ENCODE measurements at regions of chr15 and their contacts with region 1.

Region 1: DNA sequence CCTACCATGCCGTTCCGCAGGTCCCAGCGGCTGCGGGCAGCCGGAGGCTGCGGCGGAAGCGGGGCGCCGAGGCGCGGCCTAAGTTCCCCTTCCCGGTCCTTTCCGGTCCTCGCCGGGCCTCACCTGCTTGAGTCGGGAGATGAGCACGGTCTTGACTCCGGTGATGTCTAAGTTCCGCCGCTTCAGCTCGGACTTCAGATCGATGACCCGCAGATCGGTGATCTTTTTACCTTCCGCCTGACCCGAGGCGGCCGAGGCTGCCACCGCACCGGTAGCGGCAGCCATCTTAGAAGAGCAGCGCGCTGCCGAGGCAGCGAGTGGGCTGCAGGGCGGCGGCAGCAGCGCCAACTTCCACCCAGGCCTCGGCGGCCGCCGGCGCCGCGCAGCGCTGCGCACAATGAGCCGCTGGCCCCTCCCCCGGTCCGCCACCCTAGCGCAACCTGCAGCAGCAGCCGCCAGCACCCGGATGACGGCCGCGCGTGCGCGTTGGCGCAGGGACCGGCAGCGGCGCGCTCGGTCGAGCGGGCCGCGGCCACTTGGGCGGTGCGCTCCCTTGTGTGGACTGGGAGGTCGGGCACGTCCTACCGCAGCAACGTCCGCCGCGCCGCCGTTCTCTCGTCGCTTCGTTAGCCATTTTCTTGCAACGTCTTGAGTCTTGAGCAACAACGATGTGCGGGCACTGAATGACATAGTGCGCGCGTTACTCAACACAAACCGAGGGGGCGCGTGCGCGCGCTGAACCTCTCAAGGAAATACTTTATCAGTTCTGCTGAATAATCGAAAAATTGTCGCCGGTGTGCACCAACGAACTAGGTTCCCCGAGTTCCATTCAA is at the start of gene SLTM:
- DNase-seq: peak; percentile 96
- ATAC-seq: peak; percentile 94
- H3K4me3 Mint-ChIP-seq: peak within 1 kb of the TSS; percentile 90
- H3K27ac Mint-ChIP-seq: peak within 1 kb of the TSS; percentile 100
- H3K4me1 Mint-ChIP-seq: peaks cover 17% of the 10 kb centered on the region
- H3K27me3 Mint-ChIP-seq: no peaks in the 10 kb centered on the region
- total RNA-seq, gene SLTM: 85.6 to 85.9 TPM

Region 2: DNA sequence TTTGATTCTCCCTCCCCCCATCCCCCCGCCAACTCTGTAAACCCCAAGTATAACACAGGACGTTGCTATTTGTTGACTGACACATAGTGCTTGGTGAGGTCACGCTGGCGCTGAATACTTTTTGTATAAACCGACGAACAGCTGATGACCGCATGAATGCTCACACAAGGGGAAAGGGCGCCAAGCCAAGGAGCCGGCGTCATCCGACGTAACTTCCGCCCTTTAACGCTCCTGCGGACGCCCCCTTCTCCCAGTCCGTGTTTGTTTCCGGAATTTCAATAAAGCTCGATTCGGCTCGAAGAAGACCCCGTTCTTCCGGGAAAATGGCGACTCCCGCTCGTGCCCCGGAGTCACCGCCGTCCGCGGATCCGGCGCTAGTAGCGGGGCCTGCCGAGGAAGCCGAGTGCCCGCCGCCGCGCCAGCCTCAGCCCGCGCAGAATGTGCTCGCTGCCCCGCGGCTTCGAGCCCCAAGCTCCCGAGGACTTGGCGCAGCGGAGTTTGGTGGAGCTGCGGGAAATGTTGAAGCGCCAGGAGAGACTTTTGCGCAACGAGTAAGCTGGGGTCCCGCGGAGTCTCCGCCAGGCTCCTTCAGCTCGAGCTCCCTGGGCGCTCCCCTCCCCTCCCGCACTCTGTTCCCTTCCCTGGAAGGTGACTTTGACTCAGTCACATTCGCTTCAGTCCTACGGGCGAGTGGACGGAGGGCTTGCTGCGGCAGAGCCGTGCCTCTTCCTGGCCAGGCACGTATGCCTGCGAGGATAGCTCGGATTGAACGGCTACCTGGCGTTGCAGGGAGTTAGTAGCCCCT is 1226.9 kb before region 1 on chr15 and contains the start of gene POLR2M:
- CTCF ChIA-PET with region 1: no interaction called
- POLR2A ChIA-PET with region 1: no interaction called
- intact Hi-C with region 1: loop called in 1 of 2 experiments (anchors 5 kb)
- DNase-seq: peak; percentile 96
- ATAC-seq: peak; percentile 94
- H3K4me3 Mint-ChIP-seq: peak within 1 kb of the TSS; percentile 90
- H3K27ac Mint-ChIP-seq: peak within 1 kb of the TSS; percentile 95
- H3K4me1 Mint-ChIP-seq: peaks cover 70% of the 10 kb centered on the region
- H3K27me3 Mint-ChIP-seq: no peaks in the 10 kb centered on the region
- total RNA-seq, gene POLR2M: 76.1 to 87.2 TPM

Region 3: DNA sequence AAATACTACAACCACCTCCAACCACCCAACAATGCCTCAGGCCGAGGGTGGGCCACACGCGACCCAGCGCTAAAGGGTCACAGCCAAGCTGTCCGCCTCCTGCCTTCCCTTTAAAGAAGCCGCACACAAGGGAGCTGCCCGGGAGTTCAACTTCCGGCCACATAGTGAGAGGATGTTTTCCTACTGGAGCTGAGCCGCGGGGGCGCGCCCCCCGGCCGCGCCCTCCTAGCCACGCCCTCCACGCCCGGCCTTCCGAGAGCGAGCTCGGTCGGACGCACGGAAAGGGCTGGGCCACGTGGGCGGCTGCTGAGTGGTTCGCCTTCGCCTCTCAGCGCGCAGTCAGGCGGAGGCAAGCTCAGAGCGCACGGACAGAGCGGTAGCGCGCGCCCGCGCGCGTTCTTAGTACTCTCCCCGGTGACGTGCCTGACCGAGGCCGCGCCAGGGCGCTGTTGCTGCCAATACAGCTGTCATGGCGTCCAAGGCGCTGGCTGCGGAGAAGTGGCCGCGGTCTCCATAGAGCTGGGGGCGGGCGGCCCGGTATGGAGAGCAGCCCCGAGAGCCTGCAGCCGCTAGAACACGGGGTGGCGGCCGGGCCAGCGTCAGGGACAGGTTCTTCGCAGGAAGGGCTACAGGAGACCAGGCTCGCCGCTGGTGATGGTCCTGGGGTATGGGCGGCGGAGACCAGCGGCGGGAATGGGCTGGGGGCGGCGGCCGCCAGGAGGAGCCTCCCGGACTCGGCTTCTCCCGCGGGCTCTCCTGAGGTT is 162.5 kb before region 1 on chr15 and contains the start of gene MINDY2:
- CTCF ChIA-PET with region 1: no interaction called
- POLR2A ChIA-PET with region 1: interaction called, 8 read pairs
- intact Hi-C with region 1: loop called (anchors 1 kb)
- DNase-seq: peak; percentile 97
- ATAC-seq: peak; percentile 96
- H3K4me3 Mint-ChIP-seq: no peak within 1 kb of the TSS
- H3K27ac Mint-ChIP-seq: peak within 1 kb of the TSS; percentile 88
- H3K4me1 Mint-ChIP-seq: peaks cover 12% of the 10 kb centered on the region
- H3K27me3 Mint-ChIP-seq: no peaks in the 10 kb centered on the region
- total RNA-seq, gene MINDY2: 8.2 to 9.2 TPM

Region 4: DNA sequence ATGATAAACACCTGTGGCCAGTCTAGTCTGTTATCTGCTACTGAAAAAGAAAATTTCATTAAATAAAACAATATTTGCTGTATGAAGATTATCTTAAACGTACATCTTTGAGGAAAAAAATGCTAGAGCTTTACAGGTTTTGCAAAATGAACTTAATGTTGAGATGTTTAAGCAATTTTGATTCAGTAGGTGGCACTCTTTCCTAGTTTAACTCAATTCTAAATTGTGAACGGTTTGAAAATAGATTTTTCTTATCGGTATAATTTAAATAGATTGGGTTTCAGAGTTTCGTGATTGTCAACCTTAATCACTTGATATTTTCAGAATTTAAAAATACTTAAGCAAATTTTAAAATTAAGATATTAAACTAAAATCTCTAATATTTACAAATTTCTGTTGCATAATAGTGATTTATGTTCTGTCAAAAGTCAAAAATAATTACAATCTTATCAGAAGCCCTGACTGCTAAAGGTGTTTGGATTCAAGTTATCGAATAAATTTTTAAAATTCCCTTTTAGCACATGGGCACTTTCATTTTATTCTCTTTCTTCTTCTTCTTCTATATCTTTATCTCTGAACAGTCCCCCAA is 46.9 kb after region 1 on chr15:
- CTCF ChIA-PET with region 1: no interaction called
- POLR2A ChIA-PET with region 1: no interaction called
- intact Hi-C with region 1: loop called (anchors 1 to 2 kb)
- DNase-seq: no peak
- ATAC-seq: no peak
- H3K4me3 Mint-ChIP-seq: no peak overlapping the region
- H3K27ac Mint-ChIP-seq: no peak overlapping the region
- H3K4me1 Mint-ChIP-seq: peaks cover 39% of the 10 kb centered on the region
- H3K27me3 Mint-ChIP-seq: no peaks in the 10 kb centered on the region

Region 5: DNA sequence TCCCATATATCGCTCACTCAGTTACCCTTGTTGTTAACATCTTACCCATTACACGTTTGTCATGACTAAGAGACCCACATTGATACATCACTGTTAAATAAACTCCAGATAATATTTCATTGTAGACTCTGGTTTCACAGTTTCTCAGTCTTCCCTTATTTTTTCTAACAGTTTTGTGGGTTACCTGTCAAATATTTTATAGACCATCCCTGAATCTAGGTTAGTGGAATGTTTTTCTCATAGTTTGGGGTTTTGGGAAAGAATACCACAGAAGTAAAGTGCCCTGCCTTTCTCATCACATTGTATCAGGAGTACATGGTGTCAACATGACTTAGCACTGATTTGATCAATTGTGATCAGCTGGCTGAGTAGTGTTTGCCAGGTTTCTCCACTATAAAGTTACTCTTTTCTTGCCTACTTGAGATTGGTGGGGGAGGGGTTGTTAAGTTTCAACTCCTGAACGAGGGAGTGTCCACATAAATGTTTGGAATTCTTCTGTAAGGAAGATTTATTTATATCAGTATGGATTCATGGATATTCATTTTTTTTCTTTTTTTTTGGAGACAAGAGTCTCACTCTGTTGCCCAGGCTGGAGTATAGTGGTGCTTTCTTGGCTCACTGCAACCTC is 79.9 kb after region 1 on chr15:
- CTCF ChIA-PET with region 1: no interaction called
- POLR2A ChIA-PET with region 1: no interaction called
- intact Hi-C with region 1: no loop called
- DNase-seq: no peak
- ATAC-seq: no peak
- H3K4me3 Mint-ChIP-seq: no peak overlapping the region
- H3K27ac Mint-ChIP-seq: no peak overlapping the region
- H3K4me1 Mint-ChIP-seq: peaks cover 30% of the 10 kb centered on the region
- H3K27me3 Mint-ChIP-seq: no peaks in the 10 kb centered on the region

Region 6: GRCh38 chr15:59028387-59028955 is 95.0 kb after region 1 on chr15:
- CTCF ChIA-PET with region 1: no interaction called
- POLR2A ChIA-PET with region 1: no interaction called
- intact Hi-C with region 1: loop called in 1 of 2 experiments (anchors 1 kb)
- DNase-seq: no peak
- ATAC-seq: peak; percentile 75
- H3K4me3 Mint-ChIP-seq: no peak overlapping the region
- H3K27ac Mint-ChIP-seq: no peak overlapping the region
- H3K4me1 Mint-ChIP-seq: peaks cover 38% of the 10 kb centered on the region
- H3K27me3 Mint-ChIP-seq: no peaks in the 10 kb centered on the region

Region 7: DNA sequence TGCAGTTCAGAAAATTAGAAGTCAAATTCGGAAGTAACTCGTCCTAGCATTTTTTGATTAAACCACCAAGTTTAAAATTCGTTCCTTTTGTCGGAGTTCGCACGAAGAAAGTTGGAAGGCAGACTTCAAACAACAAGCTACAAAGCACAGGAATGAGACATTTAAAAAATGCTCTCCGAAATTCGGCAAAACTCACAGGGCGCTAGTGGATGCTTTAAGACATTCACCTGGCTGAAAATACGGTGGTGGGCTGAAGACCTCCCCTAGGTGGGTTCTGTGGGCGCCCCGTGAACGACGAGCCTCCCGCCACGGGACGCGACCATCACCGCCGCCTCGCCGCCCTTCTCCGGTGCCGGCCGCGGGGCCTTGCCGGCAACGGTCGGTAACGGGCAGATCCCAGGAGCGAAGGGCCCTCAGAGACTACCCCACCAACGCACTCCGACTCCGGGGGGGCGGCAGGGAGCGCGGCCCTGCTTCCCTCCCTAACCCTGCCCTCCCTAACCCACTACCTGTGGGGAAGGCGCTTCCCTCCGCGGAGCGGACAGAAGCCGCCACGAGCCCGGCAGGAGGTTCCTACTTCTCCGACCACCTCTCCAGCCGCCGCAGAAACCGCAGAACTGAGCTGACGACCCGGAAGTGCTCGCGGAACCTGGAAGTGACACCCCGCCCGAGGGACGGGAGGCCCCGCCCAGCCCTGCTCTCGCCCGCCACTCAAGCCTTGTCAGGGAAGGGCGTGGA is 723.6 kb after region 1 on chr15 and contains the start of gene GTF2A2:
- CTCF ChIA-PET with region 1: no interaction called
- POLR2A ChIA-PET with region 1: no interaction called
- intact Hi-C with region 1: loop called (anchors 1 to 10 kb)
- DNase-seq: peak; percentile 97
- ATAC-seq: peak; percentile 100
- H3K4me3 Mint-ChIP-seq: no peak within 1 kb of the TSS
- H3K27ac Mint-ChIP-seq: peak within 1 kb of the TSS; percentile 89
- H3K4me1 Mint-ChIP-seq: peaks cover 10% of the 10 kb centered on the region
- H3K27me3 Mint-ChIP-seq: no peaks in the 10 kb centered on the region
- total RNA-seq, gene GTF2A2: 167 to 198 TPM

Measured in activated CD4-positive, alpha-beta T cell treated with anti-CD3 and anti-CD28 coated beads for 36 hours (primary cell).